ENCODE measurements at regions of chr12 and their contacts with region 1.

Region 1: GRCh38 chr12:666766-667308 is 3.6 kb upstream of the NINJ2 start:
- DNase-seq: peak; percentile 47
- H3K4me3 Mint-ChIP-seq: peak overlapping the region; percentile 36
- H3K27ac Mint-ChIP-seq: peak overlapping the region; percentile 78
- H3K4me1 Mint-ChIP-seq: peaks cover 75% of the 10 kb centered on the region
- H3K27me3 Mint-ChIP-seq: no peaks in the 10 kb centered on the region

Region 2: DNA sequence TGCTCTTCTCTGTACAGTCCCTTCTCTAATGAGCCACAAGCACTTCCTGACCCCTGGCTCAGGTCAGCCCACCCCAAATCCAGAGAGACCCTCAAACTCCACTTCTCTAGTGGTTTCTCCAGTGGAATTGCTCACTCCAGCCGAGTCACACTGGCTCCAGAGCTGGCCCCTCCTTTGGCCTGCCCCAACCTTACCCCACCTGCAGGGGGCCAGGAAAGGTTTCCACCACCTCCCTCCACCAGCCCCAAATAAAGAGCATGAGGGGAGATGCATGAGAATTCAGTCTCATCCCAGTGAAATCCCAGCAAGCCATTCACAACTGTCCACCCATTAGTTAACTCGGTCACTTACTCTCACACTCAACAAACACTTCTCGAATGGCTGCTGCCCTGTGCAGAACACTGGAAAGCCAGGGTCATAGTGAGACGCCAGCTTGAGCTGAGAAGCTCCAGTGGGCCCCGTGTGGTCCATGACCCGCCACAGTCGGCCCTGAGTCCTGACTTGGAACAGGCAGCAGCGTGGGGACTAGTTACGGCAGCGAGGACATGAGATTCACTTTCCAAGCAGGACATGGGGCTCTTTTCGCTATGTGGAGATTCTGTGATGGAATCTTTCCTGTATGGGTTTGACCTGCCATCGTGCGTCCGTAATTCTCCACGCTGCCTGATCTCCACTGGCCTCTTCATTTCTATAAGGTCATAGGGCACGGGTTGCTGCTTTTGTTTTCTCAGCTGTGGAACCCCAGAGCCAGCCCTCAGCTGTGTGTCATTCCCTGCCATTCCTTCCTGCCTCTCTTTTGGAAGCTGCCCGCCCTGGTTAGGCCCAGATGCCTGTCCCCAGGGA is 497.1 kb before region 1 on chr12:
- CTCF ChIA-PET with region 1: no interaction called
- intact Hi-C with region 1: no loop called
- DNase-seq: no peak
- H3K4me3 Mint-ChIP-seq: no peak overlapping the region
- H3K27ac Mint-ChIP-seq: no peak overlapping the region
- H3K4me1 Mint-ChIP-seq: peaks cover 13% of the 10 kb centered on the region
- H3K27me3 Mint-ChIP-seq: peaks cover 5% of the 10 kb centered on the region

Region 3: GRCh38 chr12:530308-530707 is 136.5 kb before region 1 on chr12:
- CTCF ChIA-PET with region 1: no interaction called
- intact Hi-C with region 1: no loop called
- DNase-seq: no peak
- H3K4me3 Mint-ChIP-seq: no peak overlapping the region
- H3K27ac Mint-ChIP-seq: no peak overlapping the region
- H3K4me1 Mint-ChIP-seq: no peaks in the 10 kb centered on the region
- H3K27me3 Mint-ChIP-seq: no peaks in the 10 kb centered on the region

Region 4: DNA sequence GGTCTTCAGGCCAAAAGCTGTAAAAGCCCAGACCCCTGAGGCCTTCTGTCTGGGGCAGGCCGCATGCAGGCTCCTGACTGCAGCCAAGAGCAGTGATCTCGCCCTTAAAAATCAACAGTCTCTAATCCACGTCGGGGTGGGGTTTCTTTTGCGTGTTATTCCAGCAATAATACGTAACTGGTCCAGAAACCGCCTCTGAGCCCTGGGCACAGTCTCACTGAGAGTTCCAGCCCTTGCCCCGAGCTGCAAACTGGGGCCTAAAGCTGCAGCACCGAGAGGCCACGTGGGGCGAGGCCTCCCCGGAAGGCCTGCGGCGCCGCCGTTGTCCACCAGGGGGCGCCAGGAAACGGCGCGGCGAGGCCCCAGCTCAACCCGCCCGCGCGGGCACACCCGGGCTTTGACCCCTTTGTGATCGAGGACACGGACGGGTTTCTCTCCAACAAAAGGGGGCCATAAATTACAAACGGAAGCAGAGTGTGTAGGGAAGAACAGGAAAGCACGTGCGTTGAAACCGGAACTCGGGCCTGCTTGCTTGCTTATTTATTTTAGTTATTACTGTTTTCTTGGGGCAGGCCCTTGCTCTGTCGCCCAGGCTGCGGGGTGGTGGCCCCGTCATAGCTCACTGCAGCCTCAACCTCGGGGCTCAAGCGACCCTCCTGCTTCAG is 90.8 kb before region 1 on chr12:
- CTCF ChIA-PET with region 1: interaction called, 8 read pairs
- intact Hi-C with region 1: loop called (anchors 2 kb)
- DNase-seq: peak; percentile 80
- H3K4me3 Mint-ChIP-seq: peak overlapping the region; percentile 14
- H3K27ac Mint-ChIP-seq: no peak overlapping the region
- H3K4me1 Mint-ChIP-seq: peaks cover 29% of the 10 kb centered on the region
- H3K27me3 Mint-ChIP-seq: no peaks in the 10 kb centered on the region

Region 5: DNA sequence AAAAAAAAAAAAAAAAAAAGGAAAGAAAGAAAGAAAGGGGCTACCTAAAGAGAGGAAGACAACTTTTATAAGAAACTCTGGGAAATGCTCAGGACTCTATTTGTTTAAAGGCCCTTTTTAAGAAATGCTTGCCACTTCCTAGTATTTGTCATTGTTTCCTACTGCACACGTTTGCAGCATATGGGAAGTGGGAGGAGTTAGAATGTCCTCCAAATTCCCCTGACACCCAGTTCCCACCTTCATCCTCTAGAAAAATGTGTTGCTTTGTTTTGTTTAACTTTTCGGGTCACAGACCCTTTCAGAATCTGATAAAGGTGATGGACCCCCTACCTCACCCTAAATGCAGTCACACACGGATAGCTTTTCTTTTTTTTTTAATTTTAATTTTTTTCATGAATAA is 44.4 kb before region 1 on chr12:
- CTCF ChIA-PET with region 1: no interaction called
- intact Hi-C with region 1: loop called (anchors 1 kb)
- DNase-seq: peak; percentile 57
- H3K4me3 Mint-ChIP-seq: peak overlapping the region; percentile 10
- H3K27ac Mint-ChIP-seq: peak overlapping the region; percentile 81
- H3K4me1 Mint-ChIP-seq: peaks cover 43% of the 10 kb centered on the region
- H3K27me3 Mint-ChIP-seq: no peaks in the 10 kb centered on the region

Region 6: DNA sequence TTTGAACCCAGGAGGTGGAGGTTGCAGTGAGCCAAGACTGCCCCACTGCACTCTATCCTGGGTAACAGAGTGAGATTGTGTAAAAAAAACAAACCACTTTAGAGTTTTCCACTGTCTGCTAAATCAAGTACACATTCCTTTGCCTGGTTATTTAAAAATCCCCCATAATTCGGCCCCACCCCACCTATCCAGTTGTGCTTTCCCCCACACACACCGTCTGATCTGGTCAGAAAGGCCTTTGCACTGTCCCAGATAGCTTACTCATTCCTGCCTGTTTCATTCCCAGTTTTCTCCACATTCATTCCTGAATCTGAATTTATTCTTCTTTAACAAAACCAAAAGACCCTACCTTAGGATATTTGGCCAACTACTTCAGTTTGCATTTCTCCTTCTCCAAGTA is 33.1 kb before region 1 on chr12:
- CTCF ChIA-PET with region 1: no interaction called
- intact Hi-C with region 1: no loop called
- DNase-seq: no peak
- H3K4me3 Mint-ChIP-seq: no peak overlapping the region
- H3K27ac Mint-ChIP-seq: no peak overlapping the region
- H3K4me1 Mint-ChIP-seq: peaks cover 25% of the 10 kb centered on the region
- H3K27me3 Mint-ChIP-seq: no peaks in the 10 kb centered on the region

Region 7: GRCh38 chr12:685388-685787 is 18.6 kb after region 1 on chr12:
- CTCF ChIA-PET with region 1: interaction called, 3 read pairs
- intact Hi-C with region 1: loop called (anchors 1 kb)
- DNase-seq: peak; percentile 94
- H3K4me3 Mint-ChIP-seq: peak overlapping the region; percentile 36
- H3K27ac Mint-ChIP-seq: peak overlapping the region; percentile 82
- H3K4me1 Mint-ChIP-seq: peaks cover 36% of the 10 kb centered on the region
- H3K27me3 Mint-ChIP-seq: no peaks in the 10 kb centered on the region

Region 8: GRCh38 chr12:726281-727140 is 59.7 kb after region 1 on chr12:
- CTCF ChIA-PET with region 1: no interaction called
- intact Hi-C with region 1: no loop called
- DNase-seq: peak; percentile 59
- H3K4me3 Mint-ChIP-seq: no peak overlapping the region
- H3K27ac Mint-ChIP-seq: peak overlapping the region; percentile 56
- H3K4me1 Mint-ChIP-seq: peaks cover 83% of the 10 kb centered on the region
- H3K27me3 Mint-ChIP-seq: no peaks in the 10 kb centered on the region

Region 9: DNA sequence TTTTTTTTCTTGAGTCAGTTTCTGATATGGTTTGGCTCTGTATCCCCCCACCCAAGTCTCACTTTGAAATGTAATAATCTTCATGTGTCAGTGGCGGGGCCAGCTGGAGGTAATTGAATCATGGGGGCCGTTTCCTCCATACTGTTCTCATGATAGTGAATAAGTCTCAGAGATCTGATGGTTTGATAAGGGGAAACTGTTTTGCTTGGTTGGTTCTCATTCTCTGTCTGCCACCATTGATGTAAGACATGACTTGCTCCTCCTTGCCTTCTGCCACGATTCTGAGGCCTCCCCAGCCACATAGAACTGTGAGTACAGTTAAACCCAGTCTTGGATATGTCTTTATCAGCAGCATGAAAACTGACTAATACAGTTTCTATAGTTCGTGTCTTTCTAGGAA is 128.5 kb after region 1 on chr12:
- CTCF ChIA-PET with region 1: no interaction called
- intact Hi-C with region 1: loop called (anchors 1 kb)
- DNase-seq: peak; percentile 83
- H3K4me3 Mint-ChIP-seq: peak overlapping the region; percentile 31
- H3K27ac Mint-ChIP-seq: peak overlapping the region; percentile 88
- H3K4me1 Mint-ChIP-seq: peaks cover 77% of the 10 kb centered on the region
- H3K27me3 Mint-ChIP-seq: no peaks in the 10 kb centered on the region